Motor neuron (in vitro differentiated cells): ENCODE measurements at regions of chr1 and their contacts with region 1.

Region 1: DNA sequence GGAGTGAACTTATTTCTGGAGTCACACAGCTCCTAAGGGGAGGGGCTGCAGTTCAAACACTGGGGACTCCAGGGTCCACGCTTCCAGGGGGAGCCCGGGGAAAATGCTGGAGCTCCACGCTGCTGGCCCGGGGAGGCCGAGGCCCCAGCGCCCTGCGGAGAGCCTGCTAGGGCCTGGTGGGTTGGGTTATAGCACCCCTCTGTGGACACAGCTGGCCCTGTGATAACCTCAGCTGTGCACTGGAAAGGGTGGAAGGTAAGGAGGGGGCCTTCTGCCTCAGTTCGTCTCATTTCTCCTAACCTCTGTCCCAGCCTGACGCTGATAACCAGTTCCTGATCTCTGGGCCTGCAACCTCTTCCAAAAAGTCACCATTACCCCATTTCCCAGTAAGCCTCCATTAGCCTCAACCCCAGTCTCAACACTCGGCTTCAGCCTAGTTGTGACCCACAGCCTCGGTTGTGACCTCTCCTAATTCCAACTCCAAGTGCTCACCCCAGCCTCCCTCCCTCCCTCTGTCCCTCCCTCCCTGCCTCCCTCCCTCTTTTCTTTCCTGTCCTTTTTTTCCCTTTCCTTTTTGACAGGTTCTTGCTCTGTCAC is 7.1 kb downstream of the NBL1 start:
- ATAC-seq: peak; percentile 51 to 95 (median 88)
- H3K4me3 ChIP-seq: no peak overlapping the region
- H3K27ac ChIP-seq: no peak overlapping the region
- H3K4me1 ChIP-seq: peaks cover 0 to 5% of the 10 kb centered on the region in 2 donors

Region 2: GRCh38 chr1:18875107-18875795 is 776.0 kb before region 1 on chr1:
- in situ Hi-C with region 1: loop called in 1 of 9 experiments (anchors 25 kb)
- ATAC-seq: peak; percentile 28 to 92 (median 54)
- H3K4me3 ChIP-seq: no peak overlapping the region
- H3K27ac ChIP-seq: no peak overlapping the region
- H3K4me1 ChIP-seq: peaks cover 9 to 14% of the 10 kb centered on the region in 2 donors

Region 3: GRCh38 chr1:18902523-18903290 is 748.5 kb before region 1 on chr1 and contains the start of gene ALDH4A1:
- in situ Hi-C with region 1: loop called in 2 of 9 experiments (anchors 25 kb)
- ATAC-seq: peak; percentile 90 to 97 (median 96)
- H3K4me3 ChIP-seq: peak within 1 kb of the TSS; percentile 47 to 76 (median 63)
- H3K27ac ChIP-seq: peak within 1 kb of the TSS; percentile 86 to 93
- H3K4me1 ChIP-seq: peaks cover 7 to 12% of the 10 kb centered on the region in 2 donors
- total RNA-seq, gene ALDH4A1: 3.0 to 57.5 (median 8.8) TPM

Region 4: GRCh38 chr1:19390901-19391595 is 260.2 kb before region 1 on chr1:
- in situ Hi-C with region 1: loop called in 3 of 9 experiments (anchors 25 kb)
- ATAC-seq: peak in 3 of 8 experiments; percentile 9 to 40 (median 30)
- H3K4me3 ChIP-seq: no peak overlapping the region
- H3K27ac ChIP-seq: no peak overlapping the region
- H3K4me1 ChIP-seq: peaks cover 0 to 16% of the 10 kb centered on the region in 2 donors

Region 5: DNA sequence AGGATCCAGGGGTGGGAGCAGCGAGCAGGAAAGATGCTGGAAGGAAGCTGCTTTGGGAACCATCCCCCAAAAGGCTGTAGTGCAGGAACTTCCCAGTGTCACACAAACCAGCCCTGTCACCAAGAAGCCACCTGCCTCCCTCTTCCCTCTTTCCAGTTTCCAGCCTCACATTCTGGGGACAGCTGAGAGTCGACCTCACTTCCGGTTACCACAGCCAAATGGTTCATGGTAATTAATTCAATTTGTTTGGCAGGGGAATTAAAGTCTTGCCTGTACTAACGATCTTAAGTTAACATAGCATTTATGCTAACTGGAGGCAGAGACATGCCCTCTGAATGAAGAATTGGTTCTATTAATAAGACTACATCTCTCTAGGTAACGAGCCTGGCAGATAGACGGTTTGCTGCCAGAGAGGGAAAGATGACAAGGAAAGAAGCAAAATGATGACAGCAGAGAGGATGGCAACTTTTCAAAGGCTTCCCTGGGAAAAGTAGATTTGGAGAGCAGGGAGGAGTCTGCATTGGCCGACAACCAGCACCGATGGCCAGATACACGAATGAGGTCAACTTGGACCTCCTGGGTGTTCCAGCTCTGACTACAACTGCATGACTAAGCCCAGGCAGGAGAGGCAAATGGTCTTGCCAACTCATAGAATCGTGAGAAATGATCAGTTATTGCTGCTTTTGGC is 84.3 kb after region 1 on chr1:
- in situ Hi-C with region 1: no loop called
- ATAC-seq: peak in 3 of 8 experiments; percentile 17 to 97 (median 97)
- H3K4me3 ChIP-seq: no peak overlapping the region
- H3K27ac ChIP-seq: no peak overlapping the region
- H3K4me1 ChIP-seq: peaks cover 0 to 15% of the 10 kb centered on the region in 2 donors

Region 6: DNA sequence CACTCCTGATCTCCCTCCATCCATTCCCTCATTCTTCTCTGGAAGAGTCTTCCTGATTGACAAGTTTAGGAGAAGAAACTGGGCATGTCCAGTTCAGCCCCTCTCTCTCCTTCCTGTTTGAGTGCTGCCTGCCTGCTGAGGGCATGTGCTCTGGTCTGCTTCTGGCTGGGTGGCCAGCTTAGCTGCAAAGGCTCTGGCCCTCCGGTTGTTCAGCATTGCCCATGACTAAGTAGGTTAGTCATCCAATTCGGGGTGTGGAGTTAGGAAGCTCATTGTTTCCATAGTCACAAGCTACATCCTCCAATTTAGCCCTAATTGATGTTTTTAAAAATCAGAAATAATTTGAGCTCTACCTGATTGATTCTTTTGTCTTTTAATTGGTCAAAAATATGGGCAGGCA is 297.8 kb after region 1 on chr1:
- in situ Hi-C with region 1: no loop called
- ATAC-seq: peak in 4 of 8 experiments; percentile 29 to 100 (median 72)
- H3K4me3 ChIP-seq: no peak overlapping the region
- H3K27ac ChIP-seq: no peak overlapping the region
- H3K4me1 ChIP-seq: no peaks in the 10 kb centered on the region

Region 7: GRCh38 chr1:20151906-20152598 is 500.8 kb after region 1 on chr1:
- in situ Hi-C with region 1: loop called in 1 of 9 experiments (anchors 25 kb)
- ATAC-seq: peak; percentile 85 to 99 (median 92)
- H3K4me3 ChIP-seq: peak overlapping the region; percentile 11 to 25 (median 19)
- H3K27ac ChIP-seq: no peak overlapping the region
- H3K4me1 ChIP-seq: peaks cover 0 to 15% of the 10 kb centered on the region in 2 donors